Calu3 (cell line): ENCODE measurements at regions of chr14 and their contacts with region 1.

Region 1: DNA sequence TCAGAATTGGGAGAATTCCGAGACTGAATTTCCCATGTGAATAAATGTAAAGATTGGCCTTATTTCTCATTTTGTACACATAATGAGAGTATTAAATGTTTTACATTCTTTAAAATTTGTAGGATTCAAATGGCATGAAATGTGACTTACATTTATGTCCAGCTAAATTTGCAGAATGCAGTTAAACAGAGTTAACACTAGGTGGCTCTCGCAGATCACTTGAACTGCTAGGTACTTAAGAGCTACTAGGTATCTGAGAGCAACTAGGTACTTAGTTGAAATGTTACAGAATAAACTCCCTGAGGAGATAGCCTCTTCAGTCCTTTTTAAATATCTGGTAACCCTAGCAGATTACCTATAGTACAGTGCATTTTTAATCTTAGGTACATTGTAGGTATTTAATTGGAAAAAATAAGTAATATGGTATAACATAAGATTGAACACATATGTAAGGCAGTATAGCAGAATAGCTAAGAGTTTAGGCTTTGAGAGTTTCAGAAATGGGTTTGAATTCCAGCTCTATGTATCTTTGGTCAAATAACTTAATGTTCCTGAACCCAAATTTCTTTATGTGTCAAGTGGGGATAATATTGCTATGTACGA is 73.8 kb downstream of the KIAA0586 start:
- DNase-seq: peak; percentile 16
- H3K4me3 Mint-ChIP-seq: no peak overlapping the region
- H3K27ac Mint-ChIP-seq: no peak overlapping the region
- H3K4me1 Mint-ChIP-seq: no peaks in the 10 kb centered on the region
- H3K27me3 Mint-ChIP-seq: no peaks in the 10 kb centered on the region
- CTCF ChIP-seq: peak; percentile 62

Region 2: DNA sequence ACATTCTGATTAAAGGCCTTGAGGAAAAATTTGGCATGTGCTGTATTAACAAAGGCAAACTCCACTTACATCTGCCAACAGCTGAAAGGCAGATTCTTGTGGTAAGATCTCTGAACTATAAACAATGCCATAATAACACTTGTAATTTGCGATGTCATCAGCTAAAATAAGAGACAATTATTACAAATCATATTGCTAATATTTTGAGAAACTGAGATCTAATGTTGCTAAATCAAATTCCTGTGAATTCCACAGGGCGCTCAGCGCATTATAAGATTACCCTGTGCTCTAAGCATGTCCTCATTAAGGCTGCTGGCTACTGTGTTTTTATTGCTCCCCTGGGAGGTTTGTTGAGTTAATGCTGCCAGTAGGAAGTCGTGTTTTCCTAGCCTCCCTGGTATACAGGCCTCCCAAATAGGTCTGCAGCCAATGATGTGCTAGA is 381.3 kb after region 1 on chr14:
- CTCF ChIA-PET with region 1: no interaction called
- intact Hi-C with region 1: loop called (anchors 10 kb)
- DNase-seq: no peak
- H3K4me3 Mint-ChIP-seq: no peak overlapping the region
- H3K27ac Mint-ChIP-seq: no peak overlapping the region
- H3K4me1 Mint-ChIP-seq: peaks cover 9% of the 10 kb centered on the region
- H3K27me3 Mint-ChIP-seq: peaks cover 36% of the 10 kb centered on the region
- CTCF ChIP-seq: no peak

Region 3: GRCh38 chr14:59020382-59020781 is 519.1 kb after region 1 on chr14:
- CTCF ChIA-PET with region 1: interaction called, 8 read pairs
- intact Hi-C with region 1: loop called (anchors 2 kb)
- DNase-seq: peak; percentile 38
- H3K4me3 Mint-ChIP-seq: no peak overlapping the region
- H3K27ac Mint-ChIP-seq: no peak overlapping the region
- H3K4me1 Mint-ChIP-seq: no peaks in the 10 kb centered on the region
- H3K27me3 Mint-ChIP-seq: no peaks in the 10 kb centered on the region
- CTCF ChIP-seq: peak; percentile 22

Region 4: GRCh38 chr14:59055439-59056045 is 554.2 kb after region 1 on chr14:
- CTCF ChIA-PET with region 1: interaction called, 11 read pairs
- intact Hi-C with region 1: loop called (anchors 1 kb)
- DNase-seq: peak; percentile 20
- H3K4me3 Mint-ChIP-seq: no peak overlapping the region
- H3K27ac Mint-ChIP-seq: no peak overlapping the region
- H3K4me1 Mint-ChIP-seq: no peaks in the 10 kb centered on the region
- H3K27me3 Mint-ChIP-seq: peaks cover 34% of the 10 kb centered on the region
- CTCF ChIP-seq: no peak